ENCODE measurements at regions of chr19 and their contacts with region 1.

Region 1: GRCh38 chr19:40425450-40426287 is at the start of gene SERTAD1:
- DNase-seq: peak; percentile 99
- H3K4me3 ChIP-seq: peak within 1 kb of the TSS; percentile 84
- H3K27ac ChIP-seq: peak within 1 kb of the TSS; percentile 61
- H3K4me1 ChIP-seq: peaks cover 20% of the 10 kb centered on the region
- CTCF ChIP-seq: peak; percentile 88
- total RNA-seq, gene SERTAD1: 5.0 and 5.7 TPM in 2 replicates

Region 2: DNA sequence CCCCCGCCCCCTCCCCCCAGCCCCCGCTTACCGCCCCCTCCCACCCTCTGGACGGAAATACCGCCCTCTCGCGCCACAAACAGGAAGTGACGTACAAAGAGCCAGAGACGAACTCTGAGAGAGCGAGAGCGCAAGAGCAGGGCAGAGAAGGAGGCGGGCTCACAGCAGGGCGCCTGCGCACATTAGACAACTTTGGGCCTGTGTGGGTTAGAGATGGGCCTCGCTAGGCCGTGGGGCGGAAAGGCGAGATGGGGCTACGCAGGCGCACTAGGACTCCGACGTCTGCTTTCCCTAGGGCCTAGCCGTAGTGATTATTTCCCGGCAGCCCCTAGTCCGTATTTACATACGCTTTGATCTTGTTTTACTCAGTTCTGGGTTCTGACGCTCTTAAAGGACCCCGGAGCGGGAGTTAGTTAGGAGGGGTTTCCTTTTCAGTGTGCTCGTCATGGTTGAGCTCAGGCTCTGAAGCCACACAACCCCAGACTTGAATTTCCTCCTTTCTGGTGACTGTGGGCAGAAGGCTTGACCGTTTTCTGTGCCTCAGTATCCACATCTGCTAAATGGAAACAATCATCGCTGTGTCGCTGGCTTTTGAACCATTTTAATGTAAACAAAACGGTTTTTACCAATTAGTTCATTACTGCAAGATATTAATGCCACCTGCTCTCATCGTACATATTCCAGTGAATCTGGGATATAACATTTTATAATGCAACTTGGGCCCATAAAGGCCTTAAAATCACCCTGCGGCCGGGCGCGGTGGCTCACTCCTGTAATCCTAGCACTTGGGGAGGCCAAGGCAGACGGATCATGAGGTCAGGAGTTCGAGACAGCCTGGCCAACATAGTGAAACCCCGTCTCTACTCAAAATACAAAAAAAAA is 140.1 kb before region 1 on chr19:
- CTCF ChIA-PET with region 1: no interaction called
- POLR2A ChIA-PET with region 1: no interaction called
- intact Hi-C with region 1: loop called (anchors 10 kb)
- DNase-seq: peak; percentile 100
- H3K4me3 ChIP-seq: peak overlapping the region; percentile 85
- H3K27ac ChIP-seq: peak overlapping the region; percentile 94
- H3K4me1 ChIP-seq: peaks cover 54% of the 10 kb centered on the region
- CTCF ChIP-seq: no peak

Region 3: GRCh38 chr19:40411125-40411842 is 14.4 kb before region 1 on chr19:
- CTCF ChIA-PET with region 1: interaction called, 10 read pairs
- POLR2A ChIA-PET with region 1: interaction called, 6 read pairs
- intact Hi-C with region 1: no loop called
- DNase-seq: peak; percentile 65
- H3K4me3 ChIP-seq: no peak overlapping the region
- H3K27ac ChIP-seq: peak overlapping the region; percentile 82
- H3K4me1 ChIP-seq: peaks cover 53% of the 10 kb centered on the region
- CTCF ChIP-seq: no peak

Region 4: GRCh38 chr19:40444192-40445028 is 18.7 kb after region 1 on chr19 and contains the start of gene SERTAD3:
- CTCF ChIA-PET with region 1: no interaction called
- POLR2A ChIA-PET with region 1: interaction called, 8 read pairs
- intact Hi-C with region 1: loop called (anchors 1 kb)
- DNase-seq: peak; percentile 98
- H3K4me3 ChIP-seq: peak within 1 kb of the TSS; percentile 85
- H3K27ac ChIP-seq: peak within 1 kb of the TSS; percentile 88
- H3K4me1 ChIP-seq: peaks cover 21% of the 10 kb centered on the region
- CTCF ChIP-seq: peak; percentile 72
- total RNA-seq, gene SERTAD3: 12.2 and 15.7 TPM in 2 replicates

Region 5: DNA sequence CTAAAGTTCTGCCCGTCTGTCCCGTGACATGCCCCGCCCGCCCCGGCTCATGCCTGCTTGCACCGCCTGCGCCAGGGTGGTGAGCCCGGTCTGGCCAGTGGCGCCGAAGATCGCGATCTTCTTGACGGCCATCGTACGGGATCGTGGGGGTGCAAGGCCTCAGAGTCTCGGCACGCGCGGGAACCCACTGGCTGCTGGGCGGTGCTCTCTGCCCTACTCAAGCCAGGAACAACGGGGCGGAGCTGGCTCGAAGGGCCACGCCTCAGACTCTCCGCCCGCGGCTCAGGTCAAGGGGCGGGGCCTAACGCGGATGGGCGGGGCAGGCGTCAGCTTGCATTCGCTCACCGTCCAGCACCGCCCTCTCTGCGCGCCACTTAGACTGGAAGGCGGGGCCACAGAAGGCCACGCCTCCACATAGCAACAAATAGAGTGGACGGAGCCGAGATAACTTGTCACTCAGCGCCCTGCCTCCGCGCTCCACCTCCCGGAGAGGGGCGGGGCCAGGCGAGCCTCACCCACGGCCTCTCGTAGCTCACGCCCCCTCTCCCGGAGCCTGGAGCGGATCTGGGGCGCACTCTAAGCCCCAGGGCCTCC is 40.0 kb after region 1 on chr19 and contains the start of gene BLVRB:
- CTCF ChIA-PET with region 1: no interaction called
- POLR2A ChIA-PET with region 1: interaction called, 3 read pairs
- intact Hi-C with region 1: loop called (anchors 2 kb)
- DNase-seq: peak; percentile 99
- H3K4me3 ChIP-seq: peak within 1 kb of the TSS; percentile 78
- H3K27ac ChIP-seq: peak within 1 kb of the TSS; percentile 29
- H3K4me1 ChIP-seq: peaks cover 43% of the 10 kb centered on the region
- CTCF ChIP-seq: no peak
- total RNA-seq, gene BLVRB: 46.0 and 48.5 TPM in 2 replicates

Region 6: DNA sequence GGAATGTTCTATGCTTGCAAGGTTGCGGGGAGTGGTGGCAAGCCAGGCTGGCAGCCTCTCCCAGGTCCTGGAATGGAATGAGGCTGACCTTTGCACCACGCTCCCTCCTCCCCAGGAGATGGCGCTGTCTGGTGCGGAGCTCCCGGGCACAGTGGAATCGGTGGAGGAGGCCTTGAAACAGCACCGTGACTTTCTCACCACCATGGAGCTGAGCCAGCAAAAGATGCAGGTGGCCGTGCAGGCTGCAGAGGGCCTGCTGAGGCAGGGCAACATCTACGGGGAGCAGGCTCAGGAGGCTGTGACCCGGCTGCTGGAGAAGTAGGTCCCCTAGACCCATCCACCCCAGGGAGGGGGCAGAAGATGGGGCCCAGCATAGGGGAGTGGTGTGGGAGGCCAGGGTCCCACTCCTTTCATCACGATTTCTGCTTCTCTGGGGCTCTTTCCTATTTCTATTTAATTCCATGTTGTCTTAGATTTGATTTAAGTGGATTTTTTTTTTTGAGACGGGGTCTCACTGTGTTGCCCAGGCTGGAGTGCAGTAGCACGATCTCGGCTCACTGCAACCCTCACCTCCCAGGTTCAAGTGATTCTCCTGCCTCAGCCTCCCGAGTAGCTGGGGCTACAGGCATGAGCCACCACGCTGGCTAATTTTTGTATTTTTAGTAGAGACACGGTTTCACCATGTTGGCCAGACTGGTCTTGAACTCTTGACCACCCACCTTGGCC is 97.8 kb after region 1 on chr19:
- CTCF ChIA-PET with region 1: no interaction called
- POLR2A ChIA-PET with region 1: no interaction called
- intact Hi-C with region 1: no loop called
- DNase-seq: peak; percentile 84
- H3K4me3 ChIP-seq: no peak overlapping the region
- H3K27ac ChIP-seq: no peak overlapping the region
- H3K4me1 ChIP-seq: peaks cover 10% of the 10 kb centered on the region
- CTCF ChIP-seq: peak; percentile 87

Region 7: DNA sequence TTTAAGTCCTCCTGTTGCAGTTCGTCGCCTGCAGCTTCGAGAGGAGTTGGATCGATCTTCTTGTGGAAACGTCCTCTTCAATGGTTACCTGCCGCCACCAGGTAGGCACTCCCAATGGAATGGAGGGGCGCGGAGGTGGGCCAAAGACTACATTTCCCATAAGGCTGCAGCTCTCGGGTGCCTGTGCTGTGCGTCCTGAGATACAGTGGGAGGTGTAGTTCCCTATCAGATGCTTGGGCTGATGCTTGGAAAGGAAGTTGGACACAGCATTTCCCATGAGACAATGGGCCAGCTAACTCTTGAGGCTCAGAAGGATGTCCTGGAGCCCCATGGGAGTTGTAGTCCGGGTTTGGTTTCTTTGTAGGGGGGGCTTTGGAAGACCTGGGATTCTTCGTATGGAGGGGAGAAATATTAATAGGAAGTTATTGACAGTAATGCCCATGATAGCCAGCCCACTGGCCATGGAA is 152.8 kb after region 1 on chr19:
- CTCF ChIA-PET with region 1: no interaction called
- POLR2A ChIA-PET with region 1: no interaction called
- intact Hi-C with region 1: no loop called
- DNase-seq: peak; percentile 34
- H3K4me3 ChIP-seq: no peak overlapping the region
- H3K27ac ChIP-seq: no peak overlapping the region
- H3K4me1 ChIP-seq: peaks cover 19% of the 10 kb centered on the region
- CTCF ChIP-seq: no peak

Measured in OCI-LY7 (cell line).